Calu3 (cell line): ENCODE measurements at regions of chr20 and their contacts with region 1.

Region 1: DNA sequence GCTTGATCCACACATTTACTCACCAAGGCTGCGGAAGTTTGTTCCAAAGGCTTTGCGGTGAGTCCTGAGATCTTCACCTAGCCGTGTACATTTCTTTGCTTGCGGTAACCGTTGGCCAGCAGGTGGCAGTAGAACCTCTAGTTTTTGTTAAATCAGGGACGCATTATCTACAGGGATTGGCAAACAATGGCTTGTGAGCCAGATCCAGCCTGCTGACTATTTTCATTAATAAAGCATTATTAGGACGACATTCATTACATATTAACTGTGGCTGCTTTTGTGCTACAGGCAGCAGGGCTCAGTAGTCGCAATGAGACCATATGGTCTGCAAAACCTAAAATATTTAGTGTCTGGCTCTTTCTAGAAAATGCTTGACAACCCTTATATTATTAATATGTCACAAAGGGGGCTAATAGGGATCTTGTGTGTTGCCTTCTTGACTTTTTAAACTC is 174.1 kb downstream of the DOK5 start:
- DNase-seq: peak; percentile 92
- H3K4me3 Mint-ChIP-seq: no peak overlapping the region
- H3K27ac Mint-ChIP-seq: no peak overlapping the region
- H3K4me1 Mint-ChIP-seq: peaks cover 8% of the 10 kb centered on the region
- H3K27me3 Mint-ChIP-seq: peaks cover 56% of the 10 kb centered on the region
- CTCF ChIP-seq: peak; percentile 88

Region 2: DNA sequence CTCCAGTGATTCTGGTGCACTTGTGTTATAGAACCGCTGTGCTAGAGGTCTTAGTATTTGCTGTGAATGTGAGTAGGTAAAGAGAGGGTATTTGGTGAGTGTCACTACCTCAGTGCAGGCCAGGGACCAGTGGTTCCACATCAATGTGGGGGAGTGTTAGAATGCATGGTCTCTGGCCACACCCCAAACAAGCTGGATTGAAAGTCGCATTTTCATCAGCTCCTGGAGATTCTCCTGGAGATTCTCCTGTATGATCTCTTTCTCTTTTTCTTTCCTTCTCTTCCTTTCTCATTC is 552.4 kb before region 1 on chr20:
- CTCF ChIA-PET with region 1: interaction called, 3 read pairs
- intact Hi-C with region 1: loop called (anchors 1 kb)
- DNase-seq: no peak
- H3K4me3 Mint-ChIP-seq: no peak overlapping the region
- H3K27ac Mint-ChIP-seq: no peak overlapping the region
- H3K4me1 Mint-ChIP-seq: peaks cover 37% of the 10 kb centered on the region
- H3K27me3 Mint-ChIP-seq: no peaks in the 10 kb centered on the region
- CTCF ChIP-seq: no peak

Region 3: GRCh38 chr20:54345301-54345724 is 304.2 kb before region 1 on chr20:
- CTCF ChIA-PET with region 1: no interaction called
- intact Hi-C with region 1: loop called (anchors 2 kb)
- DNase-seq: peak; percentile 16
- H3K4me3 Mint-ChIP-seq: peak overlapping the region; percentile 9
- H3K27ac Mint-ChIP-seq: peak overlapping the region; percentile 55
- H3K4me1 Mint-ChIP-seq: peaks cover 65% of the 10 kb centered on the region
- H3K27me3 Mint-ChIP-seq: no peaks in the 10 kb centered on the region
- CTCF ChIP-seq: no peak

Region 4: GRCh38 chr20:54456971-54457370 is 192.6 kb before region 1 on chr20:
- CTCF ChIA-PET with region 1: interaction called, 10 read pairs
- intact Hi-C with region 1: loop called (anchors 5 kb)
- DNase-seq: no peak
- H3K4me3 Mint-ChIP-seq: no peak overlapping the region
- H3K27ac Mint-ChIP-seq: no peak overlapping the region
- H3K4me1 Mint-ChIP-seq: no peaks in the 10 kb centered on the region
- H3K27me3 Mint-ChIP-seq: no peaks in the 10 kb centered on the region
- CTCF ChIP-seq: no peak

Region 5: GRCh38 chr20:54475334-54476168 is 174.0 kb before region 1 on chr20 and contains the start of gene DOK5:
- CTCF ChIA-PET with region 1: no interaction called
- intact Hi-C with region 1: loop called (anchors 5 kb)
- DNase-seq: peak; percentile 41
- H3K4me3 Mint-ChIP-seq: peak within 1 kb of the TSS; percentile 71
- H3K27ac Mint-ChIP-seq: no peak within 1 kb of the TSS
- H3K4me1 Mint-ChIP-seq: no peaks in the 10 kb centered on the region
- H3K27me3 Mint-ChIP-seq: peaks cover 70% of the 10 kb centered on the region
- CTCF ChIP-seq: no peak
- total RNA-seq, gene DOK5: 0.17 and 2.0 TPM in 2 replicates

Region 6: GRCh38 chr20:54533081-54533480 is 116.5 kb before region 1 on chr20:
- CTCF ChIA-PET with region 1: interaction called, 8 read pairs
- intact Hi-C with region 1: loop called (anchors 1 kb)
- DNase-seq: no peak
- H3K4me3 Mint-ChIP-seq: no peak overlapping the region
- H3K27ac Mint-ChIP-seq: no peak overlapping the region
- H3K4me1 Mint-ChIP-seq: no peaks in the 10 kb centered on the region
- H3K27me3 Mint-ChIP-seq: peaks cover 19% of the 10 kb centered on the region
- CTCF ChIP-seq: no peak

Region 7: GRCh38 chr20:54726768-54727422 is 77.4 kb after region 1 on chr20:
- CTCF ChIA-PET with region 1: no interaction called
- intact Hi-C with region 1: loop called (anchors 1 kb)
- DNase-seq: peak; percentile 16
- H3K4me3 Mint-ChIP-seq: no peak overlapping the region
- H3K27ac Mint-ChIP-seq: no peak overlapping the region
- H3K4me1 Mint-ChIP-seq: no peaks in the 10 kb centered on the region
- H3K27me3 Mint-ChIP-seq: peaks cover 55% of the 10 kb centered on the region
- CTCF ChIP-seq: peak; percentile 24

Region 8: DNA sequence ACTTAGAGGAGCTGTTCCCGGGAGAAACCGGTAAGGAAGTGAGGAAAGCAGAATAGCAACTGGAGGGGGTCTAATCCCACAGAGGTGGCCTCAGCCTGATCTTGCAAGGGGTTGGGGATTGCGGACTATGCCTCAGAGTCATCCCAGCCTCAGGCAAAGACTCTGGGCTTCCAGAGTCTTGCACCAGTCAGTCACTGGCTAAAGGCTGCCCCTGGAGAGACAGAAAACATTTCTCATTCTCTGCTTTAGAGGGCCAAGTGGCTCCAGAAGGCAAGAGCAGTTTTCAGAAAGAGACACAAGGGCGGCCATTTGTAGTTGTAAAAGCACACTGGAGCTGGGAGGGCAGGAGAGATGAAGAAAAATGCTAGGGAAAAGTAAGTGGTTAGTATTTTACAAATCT is 155.1 kb after region 1 on chr20:
- CTCF ChIA-PET with region 1: no interaction called
- intact Hi-C with region 1: no loop called
- DNase-seq: no peak
- H3K4me3 Mint-ChIP-seq: no peak overlapping the region
- H3K27ac Mint-ChIP-seq: no peak overlapping the region
- H3K4me1 Mint-ChIP-seq: no peaks in the 10 kb centered on the region
- H3K27me3 Mint-ChIP-seq: no peaks in the 10 kb centered on the region
- CTCF ChIP-seq: no peak